Body of pancreas (tissue), 4 donors: ENCODE measurements at regions of chr12 and their contacts with region 1.

Region 1: DNA sequence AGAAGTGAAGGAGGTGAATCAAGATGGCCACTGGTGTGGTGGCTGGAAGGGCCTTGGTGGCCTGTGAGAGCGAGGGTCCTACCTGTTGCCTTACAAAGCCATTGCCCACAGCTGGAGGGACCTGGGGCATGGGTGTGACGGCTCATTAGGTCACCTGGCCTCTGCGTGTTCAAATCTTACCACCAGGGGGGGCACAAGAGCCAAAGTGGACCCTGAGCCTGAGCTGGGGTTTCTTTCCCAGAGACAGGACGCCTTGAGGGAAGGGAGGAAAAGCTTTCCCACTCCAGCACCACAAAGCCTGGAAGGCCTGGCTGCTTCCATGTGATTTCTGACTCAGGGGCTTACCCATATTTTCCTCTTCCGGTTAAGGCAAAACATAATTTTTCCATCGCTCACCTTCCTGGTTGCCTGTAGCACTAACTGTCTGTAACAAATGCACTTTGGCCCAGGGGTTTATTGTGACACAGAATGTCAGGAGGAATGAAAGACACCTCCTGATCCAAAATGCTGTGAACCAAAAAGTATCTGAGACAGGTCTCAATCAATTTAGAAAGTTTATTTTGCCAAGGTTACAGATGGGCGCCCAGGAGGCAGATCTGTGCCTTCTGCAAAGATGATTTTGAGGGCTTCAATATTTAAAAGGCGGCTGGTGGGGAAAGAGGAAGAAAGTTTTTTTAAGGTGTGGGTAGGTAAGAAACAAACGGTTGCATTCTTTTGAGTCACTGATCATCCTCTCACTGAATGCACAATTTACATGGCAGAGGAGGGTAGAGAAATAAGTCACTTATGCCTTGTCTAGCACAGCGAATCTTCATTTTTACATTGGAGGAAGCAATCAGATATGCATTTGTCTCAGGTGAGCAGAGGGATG is 4.3 kb upstream of the CD9 start:
- DNase-seq: peak; percentile 89 to 93 (median 91)
- ATAC-seq: peak; percentile 84
- H3K4me3 ChIP-seq: no peak overlapping the region
- H3K27ac ChIP-seq: peak overlapping the region in 3 of 4 donors; percentile 44 to 62 (median 61)
- H3K4me1 ChIP-seq: peaks cover 11% of the 10 kb centered on the region
- H3K27me3 ChIP-seq: no peaks in the 10 kb centered on the region
- CTCF ChIP-seq: peak; percentile 87 to 97 (median 96)
- POLR2A ChIP-seq: peak in 1 of 3 donors; percentile 17

Region 2: DNA sequence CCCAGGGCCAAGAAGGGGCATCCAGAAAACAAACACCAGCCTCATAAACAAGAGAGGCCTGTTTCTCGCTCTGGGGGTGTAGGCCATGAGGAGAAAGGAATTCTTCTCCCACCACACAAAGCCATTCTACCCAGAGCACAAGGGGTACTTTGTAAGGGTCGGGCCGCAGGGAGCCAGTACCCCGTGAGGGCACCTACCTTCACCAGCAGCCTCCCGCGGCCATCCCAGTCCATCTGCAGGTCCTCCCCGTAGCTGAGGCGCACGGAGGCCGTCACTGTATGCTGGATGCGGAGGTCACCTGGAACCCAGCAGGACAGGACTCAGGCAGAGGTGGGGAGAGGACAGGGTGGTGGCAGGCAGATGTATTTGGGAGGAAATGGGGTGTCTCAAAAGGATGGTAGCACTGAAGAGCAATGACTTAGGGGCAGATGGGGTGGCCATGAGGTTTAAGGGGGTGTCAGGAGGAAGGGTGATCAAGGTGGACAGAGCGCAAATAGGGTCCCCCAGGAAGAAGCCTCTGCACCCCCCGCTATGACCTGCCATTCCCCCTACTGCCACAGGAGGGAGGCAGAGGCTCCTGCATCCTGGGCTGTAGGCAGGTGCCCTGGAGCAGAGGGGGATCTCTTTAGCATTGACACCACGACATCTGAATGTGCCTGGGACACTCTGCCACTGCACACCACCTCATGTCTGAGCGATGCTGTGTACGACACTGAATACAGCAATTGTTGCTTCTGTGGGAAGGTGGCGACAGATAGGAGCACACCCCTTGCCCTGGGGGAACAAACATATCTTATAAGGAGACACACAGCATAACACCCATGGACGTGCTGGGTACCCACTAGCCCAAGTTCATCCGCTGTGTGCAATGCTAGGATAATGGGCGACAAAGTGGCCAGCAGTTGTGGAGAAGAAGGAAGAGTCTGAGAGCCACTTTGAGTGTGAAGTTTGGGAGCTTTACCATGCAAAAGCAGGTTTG is 132.9 kb before region 1 on chr12:
- intact Hi-C with region 1: loop called (anchors 10 kb)
- DNase-seq: peak; percentile 33 to 54 (median 52)
- ATAC-seq: peak; percentile 74
- H3K4me3 ChIP-seq: no peak overlapping the region
- H3K27ac ChIP-seq: no peak overlapping the region
- H3K4me1 ChIP-seq: no peaks in the 10 kb centered on the region
- H3K27me3 ChIP-seq: no peaks in the 10 kb centered on the region
- CTCF ChIP-seq: peak; percentile 68 to 93 (median 73)
- POLR2A ChIP-seq: no peak

Region 3: GRCh38 chr12:6272300-6273204 is 76.7 kb after region 1 on chr12:
- intact Hi-C with region 1: loop called (anchors 5 kb)
- DNase-seq: no peak
- ATAC-seq: peak; percentile 16
- H3K4me3 ChIP-seq: no peak overlapping the region
- H3K27ac ChIP-seq: peak overlapping the region in 2 of 4 donors; percentile 27 to 34
- H3K4me1 ChIP-seq: peaks cover 21% of the 10 kb centered on the region
- H3K27me3 ChIP-seq: no peaks in the 10 kb centered on the region
- CTCF ChIP-seq: no peak
- POLR2A ChIP-seq: no peak

Region 4: DNA sequence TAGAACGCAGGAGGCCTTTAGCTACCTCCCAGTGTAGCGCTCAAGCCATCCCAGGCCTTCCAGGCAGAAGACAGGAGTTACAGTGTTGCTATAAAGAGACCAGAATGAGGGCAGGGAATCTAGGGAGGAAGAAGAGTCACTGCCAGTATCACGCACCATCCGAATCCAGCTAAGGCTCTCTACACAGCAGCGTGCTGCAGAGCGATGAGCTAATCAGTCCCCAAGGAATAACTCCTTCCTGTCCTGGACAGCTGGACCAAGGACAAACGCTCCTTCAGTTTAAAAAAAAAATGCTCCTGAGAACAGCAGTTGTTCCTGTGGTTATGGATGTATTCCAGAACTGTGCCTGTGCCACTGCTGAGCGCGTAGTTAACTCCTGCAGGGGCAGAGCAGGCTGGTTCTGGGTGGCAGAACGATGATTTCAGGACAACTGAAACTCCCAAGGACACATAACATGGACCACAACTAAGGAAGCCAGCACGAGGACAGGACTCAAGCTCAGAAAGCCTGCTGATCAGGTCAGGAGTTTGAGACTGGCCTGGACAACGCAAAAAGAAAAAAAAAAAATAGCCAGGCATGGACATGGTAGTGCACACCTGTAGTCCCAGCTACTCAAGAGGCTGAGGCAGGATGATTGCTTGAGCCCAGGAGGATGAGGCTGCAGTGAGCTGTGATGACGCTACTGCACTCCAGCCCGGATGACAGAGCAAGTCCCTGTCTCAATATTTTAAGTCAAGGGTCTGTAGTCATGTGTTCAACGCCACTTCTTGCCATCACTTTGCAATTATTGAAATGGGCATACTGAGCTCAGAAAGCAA is 357.4 kb after region 1 on chr12:
- intact Hi-C with region 1: no loop called
- DNase-seq: no peak
- ATAC-seq: peak; percentile 10
- H3K4me3 ChIP-seq: no peak overlapping the region
- H3K27ac ChIP-seq: peak overlapping the region in 1 of 4 donors; percentile 35
- H3K4me1 ChIP-seq: peaks cover 36% of the 10 kb centered on the region
- H3K27me3 ChIP-seq: no peaks in the 10 kb centered on the region
- CTCF ChIP-seq: no peak
- POLR2A ChIP-seq: no peak